ENCODE measurements at regions of chr12 and their contacts with region 1.

Region 1: GRCh38 chr12:46209914-46210872 is 58.6 kb downstream of the SLC38A1 start:
- DNase-seq: peak; percentile 47
- ATAC-seq: peak; percentile 70
- H3K4me3 Mint-ChIP-seq: peak overlapping the region; percentile 63
- H3K27ac Mint-ChIP-seq: peak overlapping the region; percentile 93
- H3K4me1 Mint-ChIP-seq: peaks cover 94% of the 10 kb centered on the region
- H3K27me3 Mint-ChIP-seq: no peaks in the 10 kb centered on the region
- CTCF ChIP-seq: no peak

Region 2: GRCh38 chr12:45762185-45763110 is 447.7 kb before region 1 on chr12:
- CTCF ChIA-PET with region 1: no interaction called
- POLR2A ChIA-PET with region 1: no interaction called
- intact Hi-C with region 1: no loop called
- DNase-seq: no peak
- ATAC-seq: no peak
- H3K4me3 Mint-ChIP-seq: no peak overlapping the region
- H3K27ac Mint-ChIP-seq: no peak overlapping the region
- H3K4me1 Mint-ChIP-seq: peaks cover 12% of the 10 kb centered on the region
- H3K27me3 Mint-ChIP-seq: no peaks in the 10 kb centered on the region
- CTCF ChIP-seq: no peak

Region 3: GRCh38 chr12:46179683-46180452 is 30.3 kb before region 1 on chr12:
- CTCF ChIA-PET with region 1: no interaction called
- POLR2A ChIA-PET with region 1: interaction called, 4 read pairs
- intact Hi-C with region 1: loop called (anchors 1 kb)
- DNase-seq: no peak
- ATAC-seq: peak; percentile 60
- H3K4me3 Mint-ChIP-seq: peak overlapping the region; percentile 69
- H3K27ac Mint-ChIP-seq: peak overlapping the region; percentile 82
- H3K4me1 Mint-ChIP-seq: peaks cover 98% of the 10 kb centered on the region
- H3K27me3 Mint-ChIP-seq: no peaks in the 10 kb centered on the region
- CTCF ChIP-seq: no peak

Region 4: GRCh38 chr12:46303039-46303666 is 93.0 kb after region 1 on chr12:
- CTCF ChIA-PET with region 1: interaction called, 7 read pairs
- POLR2A ChIA-PET with region 1: interaction called, 3 read pairs
- intact Hi-C with region 1: loop called (anchors 2 kb)
- DNase-seq: no peak
- ATAC-seq: peak; percentile 74
- H3K4me3 Mint-ChIP-seq: no peak overlapping the region
- H3K27ac Mint-ChIP-seq: peak overlapping the region; percentile 20
- H3K4me1 Mint-ChIP-seq: peaks cover 31% of the 10 kb centered on the region
- H3K27me3 Mint-ChIP-seq: no peaks in the 10 kb centered on the region
- CTCF ChIP-seq: peak; percentile 30